Activated naive CD4-positive, alpha-beta T cell treated with anti-CD3 and anti-CD28 coated beads for 36 hours (primary cell): ENCODE measurements at regions of chrX and their contacts with region 1.

Region 1: DNA sequence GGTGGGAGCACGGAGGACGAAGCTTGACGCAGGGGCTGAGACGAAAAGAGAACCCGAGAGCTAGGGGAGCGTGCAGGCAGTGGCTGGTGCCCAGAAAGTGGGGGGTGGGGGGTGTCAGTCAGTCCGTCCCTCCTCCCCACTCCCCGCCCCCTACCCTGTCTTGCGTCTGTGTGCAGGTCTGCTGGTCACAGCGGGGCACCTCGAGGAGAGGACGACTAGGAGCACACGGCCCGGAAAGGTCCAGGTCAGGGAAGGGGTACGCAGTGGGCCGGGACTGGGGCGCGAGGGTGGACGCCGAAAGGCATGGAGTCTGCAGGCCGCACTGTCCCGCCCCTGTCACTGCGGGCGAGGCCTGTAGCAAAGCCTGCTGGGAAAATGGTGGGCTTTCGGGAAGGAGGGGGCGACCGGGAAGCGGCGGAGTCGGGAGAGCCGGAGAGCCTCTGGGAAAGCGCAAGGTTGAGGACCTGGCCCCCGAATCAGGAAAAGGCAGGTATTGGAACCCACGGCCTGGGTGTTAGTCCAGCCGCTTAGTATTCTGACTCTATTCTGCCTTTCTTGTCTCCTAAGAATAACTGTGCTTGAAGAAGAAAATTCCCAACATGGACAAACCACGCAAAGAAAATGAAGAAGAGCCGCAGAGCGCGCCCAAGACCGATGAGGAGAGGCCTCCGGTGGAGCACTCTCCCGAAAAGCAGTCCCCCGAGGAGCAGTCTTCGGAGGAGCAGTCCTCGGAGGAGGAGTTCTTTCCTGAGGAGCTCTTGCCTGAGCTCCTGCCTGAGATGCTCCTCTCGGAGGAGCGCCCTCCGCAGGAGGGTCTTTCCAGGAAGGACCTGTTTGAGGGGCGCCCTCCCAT is 769 bp downstream of the TCEAL1 start:
- DNase-seq: peak; percentile 33
- H3K4me3 Mint-ChIP-seq: peak overlapping the region; percentile 87
- H3K27ac Mint-ChIP-seq: peak overlapping the region; percentile 87
- H3K4me1 Mint-ChIP-seq: peaks cover 19% of the 10 kb centered on the region
- H3K27me3 Mint-ChIP-seq: no peaks in the 10 kb centered on the region

Region 2: DNA sequence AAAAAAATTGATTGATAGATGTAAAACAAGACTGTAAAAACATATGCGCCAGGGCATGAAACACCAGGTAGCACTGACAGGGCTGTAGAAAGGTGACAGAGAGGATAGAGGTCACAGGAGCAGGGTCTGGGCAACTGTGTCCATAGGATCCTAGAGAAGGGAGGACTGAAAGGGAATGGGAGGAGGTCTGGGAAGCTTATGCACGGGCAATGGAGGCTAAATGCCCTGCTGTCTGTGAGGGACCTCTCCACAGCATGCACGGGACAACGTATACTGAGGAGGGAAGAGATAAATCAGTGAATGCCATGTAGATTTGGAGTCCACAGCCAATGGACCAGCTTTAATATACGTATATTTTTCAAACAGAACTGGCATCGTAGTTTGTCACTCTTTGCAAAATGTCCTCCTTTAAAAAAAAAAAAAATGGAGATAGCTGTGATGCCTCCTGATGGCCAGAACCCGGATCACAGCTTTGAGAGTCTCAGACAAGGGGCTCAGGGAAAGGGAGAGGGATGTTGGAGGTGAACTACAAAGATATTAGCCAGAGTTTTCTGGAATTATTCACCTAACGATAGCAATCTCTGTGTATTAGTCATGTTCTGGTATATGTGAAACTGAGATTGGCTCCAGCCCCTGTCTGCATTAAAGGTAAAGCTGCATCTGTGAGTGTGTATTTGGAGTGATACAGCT is 126.2 kb before region 1 on chrX:
- CTCF ChIA-PET with region 1: no interaction called
- intact Hi-C with region 1: no loop called
- DNase-seq: no peak
- H3K4me3 Mint-ChIP-seq: no peak overlapping the region
- H3K27ac Mint-ChIP-seq: no peak overlapping the region
- H3K4me1 Mint-ChIP-seq: no peaks in the 10 kb centered on the region
- H3K27me3 Mint-ChIP-seq: no peaks in the 10 kb centered on the region

Region 3: DNA sequence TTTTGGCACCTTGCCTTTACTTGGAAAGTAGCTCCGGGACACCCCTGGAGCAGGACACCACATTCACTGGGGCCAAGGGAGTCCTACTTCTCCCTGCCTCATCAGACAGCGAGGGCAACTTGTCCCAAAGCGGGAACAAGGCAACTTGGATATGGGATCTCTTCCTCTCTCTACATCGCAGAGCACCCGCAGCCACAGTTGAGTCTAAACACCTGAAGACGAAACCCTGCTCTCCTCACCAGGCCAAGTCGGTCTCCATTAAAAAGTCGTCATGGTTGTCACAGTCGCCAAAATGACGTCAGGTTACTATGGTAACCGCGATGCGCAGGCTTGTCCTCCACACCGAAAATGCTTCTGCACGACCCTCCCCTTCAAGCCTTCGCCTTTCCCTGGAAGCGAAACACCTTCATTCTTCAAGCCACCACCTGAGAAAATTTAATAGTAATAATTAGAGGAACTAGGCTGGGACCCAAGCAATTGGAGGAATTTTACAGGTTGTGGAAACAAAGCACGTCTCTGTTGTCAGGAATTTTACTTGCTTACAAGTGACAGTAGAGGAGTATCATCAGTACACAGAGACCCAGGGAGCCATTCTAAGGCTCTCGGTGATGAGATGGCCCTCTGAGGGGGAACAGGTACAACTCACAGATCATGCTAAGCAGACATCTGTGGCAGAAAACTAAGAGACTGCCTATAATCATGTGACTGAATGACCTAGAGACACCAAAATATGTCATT is 74.7 kb before region 1 on chrX:
- CTCF ChIA-PET with region 1: no interaction called
- intact Hi-C with region 1: loop called (anchors 2 kb)
- DNase-seq: peak; percentile 82
- H3K4me3 Mint-ChIP-seq: peak overlapping the region; percentile 80
- H3K27ac Mint-ChIP-seq: peak overlapping the region; percentile 54
- H3K4me1 Mint-ChIP-seq: no peaks in the 10 kb centered on the region
- H3K27me3 Mint-ChIP-seq: no peaks in the 10 kb centered on the region

Region 4: DNA sequence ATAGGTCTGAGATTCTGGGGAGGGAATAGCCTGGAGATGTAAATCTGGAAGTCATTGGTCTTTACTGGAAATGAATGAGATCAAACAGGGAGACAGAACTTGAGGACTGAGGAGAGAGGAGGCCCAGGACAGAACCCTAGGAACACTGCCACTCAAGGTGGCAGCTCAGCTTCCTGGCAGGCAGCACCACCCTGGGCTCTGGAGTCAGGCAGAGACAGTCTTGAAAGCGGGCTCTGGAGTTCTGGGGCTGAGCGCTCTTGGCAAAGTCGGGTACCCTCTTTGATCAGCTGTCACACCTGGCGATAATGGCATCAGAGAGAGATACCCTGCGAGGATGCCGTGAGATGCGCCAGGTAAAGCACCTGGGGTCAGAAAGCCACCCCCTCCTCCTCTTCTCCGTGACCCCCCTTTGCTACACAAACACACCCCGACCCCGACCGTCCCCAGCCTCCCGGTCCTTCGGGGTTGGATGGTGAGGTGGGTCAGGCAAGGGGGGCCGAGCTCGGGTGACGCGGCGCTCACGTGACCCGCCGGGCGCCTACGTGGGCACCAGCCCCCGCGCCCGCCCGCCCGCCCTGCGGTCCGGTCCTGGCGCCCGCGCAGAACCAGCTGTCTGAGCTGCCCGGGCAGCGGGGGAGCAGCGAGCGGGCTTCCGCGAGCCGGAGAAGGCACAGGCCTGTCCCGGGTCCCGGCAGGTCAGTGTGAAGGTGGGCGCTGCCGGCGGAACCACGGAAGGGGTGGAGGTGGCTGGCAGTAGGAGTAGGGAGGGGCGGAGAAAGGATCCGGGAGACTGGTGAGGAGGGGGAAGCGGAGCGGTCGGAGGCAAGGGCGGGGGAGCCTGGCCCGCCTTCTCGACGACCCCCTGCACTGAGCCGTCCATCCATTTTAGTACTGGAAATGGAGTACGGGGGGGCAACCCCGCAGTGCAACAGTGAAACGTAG is 21.9 kb before region 1 on chrX and contains the start of gene TCEAL3:
- CTCF ChIA-PET with region 1: no interaction called
- intact Hi-C with region 1: loop called (anchors 2 kb)
- DNase-seq: peak; percentile 20
- H3K4me3 Mint-ChIP-seq: peak within 1 kb of the TSS; percentile 76
- H3K27ac Mint-ChIP-seq: peak within 1 kb of the TSS; percentile 46
- H3K4me1 Mint-ChIP-seq: peaks cover 1% of the 10 kb centered on the region
- H3K27me3 Mint-ChIP-seq: no peaks in the 10 kb centered on the region
- total RNA-seq, gene TCEAL3: 4.4 to 6.2 TPM